AG04450 (cell line): ENCODE measurements at regions of chr11 and their contacts with region 1.

Region 1: DNA sequence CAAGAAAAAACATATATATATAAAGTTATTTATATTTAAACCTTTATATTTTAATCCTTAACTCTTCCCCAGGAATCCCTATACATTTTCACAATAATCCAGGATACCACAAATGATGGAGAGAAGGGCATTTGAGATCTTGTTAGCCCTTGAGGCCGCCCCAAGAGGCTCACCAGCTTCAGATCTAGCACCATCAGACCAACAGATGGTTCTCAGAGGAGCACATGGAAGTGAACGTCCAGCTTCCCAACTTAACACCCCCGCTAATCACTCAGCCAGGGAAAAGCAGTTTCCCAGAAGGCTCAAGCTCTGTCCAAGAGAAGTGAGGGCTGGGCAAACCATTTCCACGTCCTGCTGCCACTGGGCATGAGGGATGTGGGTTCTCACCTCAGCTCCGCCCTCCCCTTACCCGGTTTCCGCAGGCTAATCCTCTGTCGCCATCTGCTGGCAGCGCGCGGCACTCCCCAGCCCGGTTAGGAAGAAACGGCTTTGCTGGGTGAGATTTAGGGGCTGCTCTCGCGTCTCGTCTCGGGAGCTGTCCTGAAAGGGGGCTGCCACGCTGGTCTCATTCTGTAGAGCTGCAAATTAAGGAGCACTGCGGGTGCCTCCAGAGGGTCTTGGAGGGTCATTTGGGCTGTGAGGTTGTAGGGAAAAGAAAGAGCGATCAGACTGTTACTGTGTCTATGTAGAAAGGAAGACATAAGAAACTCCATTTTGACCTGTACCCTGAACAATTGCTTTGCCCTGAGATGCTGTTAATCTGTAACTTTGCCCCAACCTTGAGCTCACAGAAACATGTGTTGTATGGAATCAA is 6.8 kb upstream of the FAM111A start:
- DNase-seq: peak; percentile 39
- H3K4me3 ChIP-seq: no peak overlapping the region
- H3K27ac ChIP-seq: no peak overlapping the region
- H3K27me3 ChIP-seq: no peaks in the 10 kb centered on the region
- CTCF ChIP-seq: peak; percentile 99

Region 2: DNA sequence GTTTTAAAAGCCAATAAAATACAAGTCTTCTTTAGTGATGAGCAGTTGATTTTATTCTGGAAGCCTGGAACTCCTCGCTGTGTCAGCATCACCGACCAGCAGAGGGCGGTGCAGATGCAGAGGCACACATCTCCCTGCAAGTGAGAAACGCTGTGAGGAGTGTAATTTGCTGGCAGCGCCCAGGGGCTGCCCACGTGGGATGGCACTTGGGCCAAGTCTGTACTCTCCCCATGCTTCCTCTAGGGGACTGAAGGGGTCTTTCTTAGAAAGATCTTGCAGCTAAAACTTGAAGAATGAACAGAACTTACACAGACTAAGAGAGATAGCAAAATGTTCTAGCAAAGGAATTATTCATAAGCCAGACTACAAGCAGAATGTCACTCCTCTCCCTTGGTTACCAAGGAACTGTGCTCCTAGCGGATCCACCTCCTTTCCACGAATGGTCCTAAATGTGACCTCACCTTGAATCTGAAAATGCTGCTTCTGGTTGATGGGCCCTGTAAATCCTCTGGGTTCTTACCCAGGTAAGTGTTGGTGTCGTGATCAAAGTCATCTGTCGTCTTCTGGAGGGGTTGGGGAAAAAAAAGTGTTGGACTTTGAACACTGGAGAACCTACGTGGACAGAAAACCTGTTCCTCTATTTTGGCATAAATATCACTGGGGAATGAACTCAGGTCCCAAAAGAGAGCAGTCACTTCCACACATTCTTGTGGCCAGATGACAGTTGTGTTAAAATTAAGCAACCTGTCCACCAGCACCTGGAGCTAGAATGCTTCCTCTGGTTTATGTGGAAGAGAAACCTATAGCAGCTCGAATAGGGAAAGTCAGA is 481.6 kb before region 1 on chr11:
- CTCF ChIA-PET with region 1: interaction called, 12 read pairs
- POLR2A ChIA-PET with region 1: no interaction called
- DNase-seq: peak; percentile 29
- H3K4me3 ChIP-seq: no peak overlapping the region
- H3K27ac ChIP-seq: no peak overlapping the region
- H3K27me3 ChIP-seq: no peaks in the 10 kb centered on the region
- CTCF ChIP-seq: peak; percentile 93

Region 3: DNA sequence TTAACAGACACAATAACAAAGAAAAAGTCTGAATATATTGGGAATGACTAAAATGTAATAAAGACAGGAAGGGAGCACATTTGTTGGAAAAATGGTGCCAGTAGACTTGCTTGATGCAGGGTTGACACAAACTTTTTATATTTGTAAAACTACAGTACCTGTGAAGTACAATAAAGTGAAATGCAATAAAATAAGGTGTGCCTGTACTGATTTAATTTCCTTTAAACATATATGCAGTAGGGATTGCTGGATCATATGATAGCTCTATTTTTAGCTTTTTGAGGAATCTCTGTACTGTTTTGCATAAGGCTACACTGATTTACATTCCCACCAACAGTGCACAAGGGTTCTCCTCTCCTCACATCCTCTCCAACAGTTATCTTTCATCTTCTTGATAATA is 279.0 kb before region 1 on chr11:
- CTCF ChIA-PET with region 1: interaction called, 11 read pairs
- POLR2A ChIA-PET with region 1: no interaction called
- DNase-seq: no peak
- H3K4me3 ChIP-seq: no peak overlapping the region
- H3K27ac ChIP-seq: no peak overlapping the region
- H3K27me3 ChIP-seq: no peaks in the 10 kb centered on the region
- CTCF ChIP-seq: no peak

Region 4: DNA sequence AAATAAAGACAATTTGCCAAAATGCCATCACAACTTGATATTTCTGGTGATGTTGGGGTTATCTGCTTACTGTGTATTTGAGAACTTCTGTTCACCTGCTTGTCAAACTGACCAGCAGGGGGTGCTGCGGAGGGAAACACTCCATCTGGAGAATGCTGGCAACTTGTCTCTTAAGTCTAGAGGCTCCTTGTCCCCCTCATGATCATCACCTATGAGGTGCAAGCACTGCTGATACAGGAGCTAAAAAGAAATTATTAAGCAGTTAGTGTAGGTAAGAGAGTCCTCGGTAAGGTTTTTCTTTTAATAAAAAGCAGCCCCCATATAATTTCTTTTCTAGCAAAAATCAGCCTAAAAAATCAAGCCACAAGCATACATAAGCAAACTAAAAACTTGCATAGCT is 82.5 kb before region 1 on chr11:
- CTCF ChIA-PET with region 1: interaction called, 30 read pairs
- POLR2A ChIA-PET with region 1: no interaction called
- DNase-seq: peak; percentile 37
- H3K4me3 ChIP-seq: no peak overlapping the region
- H3K27ac ChIP-seq: no peak overlapping the region
- H3K27me3 ChIP-seq: peaks cover 2% of the 10 kb centered on the region
- CTCF ChIP-seq: peak; percentile 77

Region 5: GRCh38 chr11:59097113-59097708 is 38.6 kb before region 1 on chr11:
- CTCF ChIA-PET with region 1: interaction called, 66 read pairs
- POLR2A ChIA-PET with region 1: no interaction called
- DNase-seq: peak; percentile 46
- H3K4me3 ChIP-seq: no peak overlapping the region
- H3K27ac ChIP-seq: no peak overlapping the region
- H3K27me3 ChIP-seq: peaks cover 13% of the 10 kb centered on the region
- CTCF ChIP-seq: peak; percentile 78

Region 6: DNA sequence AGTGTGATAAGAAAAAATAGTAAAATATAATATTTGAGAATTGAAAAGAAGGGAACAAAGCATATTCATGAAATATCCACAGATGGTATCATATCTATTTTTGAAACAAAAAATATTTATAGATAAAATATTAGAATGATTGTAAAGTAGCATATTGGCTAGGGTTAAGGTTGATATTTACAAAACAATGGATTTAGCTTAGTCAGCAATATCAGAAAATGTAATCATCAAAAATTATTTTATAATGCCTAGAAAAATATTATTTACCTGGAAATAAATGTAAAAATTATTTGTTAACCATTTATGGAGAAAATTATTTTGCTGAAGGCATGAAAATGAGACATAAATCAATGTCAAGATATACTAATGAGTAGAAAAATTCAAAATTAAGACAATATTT is 16.0 kb before region 1 on chr11:
- CTCF ChIA-PET with region 1: interaction called, 12 read pairs
- POLR2A ChIA-PET with region 1: no interaction called
- DNase-seq: no peak
- H3K4me3 ChIP-seq: no peak overlapping the region
- H3K27ac ChIP-seq: no peak overlapping the region
- H3K27me3 ChIP-seq: no peaks in the 10 kb centered on the region
- CTCF ChIP-seq: no peak

Region 7: GRCh38 chr11:59158206-59159068 is 22.6 kb after region 1 on chr11:
- CTCF ChIA-PET with region 1: interaction called, 143 read pairs
- POLR2A ChIA-PET with region 1: no interaction called
- DNase-seq: peak; percentile 37
- H3K4me3 ChIP-seq: no peak overlapping the region
- H3K27ac ChIP-seq: no peak overlapping the region
- H3K27me3 ChIP-seq: peaks cover 8% of the 10 kb centered on the region
- CTCF ChIP-seq: peak; percentile 85

Region 8: DNA sequence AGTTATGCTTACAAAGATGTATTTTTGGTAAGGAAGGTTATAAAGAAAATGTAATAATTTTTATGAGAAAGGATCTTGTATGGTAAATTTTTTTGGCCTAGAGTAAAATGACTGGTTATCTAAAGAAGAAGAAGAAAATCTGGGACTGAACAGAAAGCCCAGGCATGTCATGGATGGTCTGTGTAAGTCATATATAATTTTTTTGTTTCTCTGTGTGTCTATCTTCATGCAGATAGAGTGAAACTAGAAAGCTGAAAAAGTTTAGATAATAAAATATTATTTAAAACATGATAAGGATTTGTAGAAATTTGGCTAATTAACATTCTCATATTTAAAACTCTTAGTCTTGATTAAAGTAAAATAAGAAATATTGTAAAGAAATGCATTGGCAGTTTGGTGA is 104.5 kb after region 1 on chr11:
- CTCF ChIA-PET with region 1: no interaction called
- POLR2A ChIA-PET with region 1: no interaction called
- DNase-seq: no peak
- H3K4me3 ChIP-seq: no peak overlapping the region
- H3K27ac ChIP-seq: no peak overlapping the region
- H3K27me3 ChIP-seq: no peaks in the 10 kb centered on the region
- CTCF ChIP-seq: no peak

Region 9: GRCh38 chr11:59901306-59901705 is 765.5 kb after region 1 on chr11:
- CTCF ChIA-PET with region 1: no interaction called
- POLR2A ChIA-PET with region 1: no interaction called
- DNase-seq: no peak
- H3K4me3 ChIP-seq: no peak overlapping the region
- H3K27ac ChIP-seq: no peak overlapping the region
- H3K27me3 ChIP-seq: no peaks in the 10 kb centered on the region
- CTCF ChIP-seq: no peak